ENCODE measurements at regions of chr14 and their contacts with region 1.

Region 1: DNA sequence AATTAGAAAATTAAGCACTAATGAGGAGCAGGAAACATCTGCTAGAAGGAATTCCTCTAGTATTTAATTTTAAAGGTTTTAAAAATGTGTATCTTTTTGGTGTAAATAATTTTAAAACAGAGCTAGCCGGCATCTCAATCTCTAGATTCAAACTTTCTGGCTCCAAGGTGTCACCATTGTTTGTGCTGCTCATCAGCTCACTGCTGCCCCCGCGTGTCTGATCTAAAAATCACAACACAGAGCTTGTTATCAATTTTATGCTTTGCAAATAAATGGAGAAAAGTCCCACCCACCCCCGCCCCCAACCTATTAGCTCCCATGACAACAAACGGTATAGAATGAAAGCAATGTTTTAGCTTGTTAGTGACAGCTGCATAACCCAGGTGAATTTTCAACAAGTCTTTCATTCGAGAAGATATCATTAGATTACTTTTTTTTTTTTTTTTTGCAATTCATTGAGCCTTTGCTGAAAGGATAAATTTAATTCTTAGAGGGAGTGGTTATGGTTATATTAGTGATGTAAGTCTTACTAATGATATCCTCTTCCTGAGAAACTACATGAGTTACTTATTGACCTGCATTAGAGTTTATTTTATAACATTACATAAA is 11.3 kb upstream of the ABHD12B start:
- DNase-seq: peak; percentile 90
- ATAC-seq: peak; percentile 71
- H3K4me3 ChIP-seq: peak overlapping the region; percentile 58 to 92 (median 69)
- H3K4me3 Mint-ChIP-seq: peak overlapping the region; percentile 95
- H3K27ac ChIP-seq: peak overlapping the region; percentile 34 to 44
- H3K27ac Mint-ChIP-seq: peak overlapping the region; percentile 91
- H3K4me1 ChIP-seq: peaks cover 9 to 14% of the 10 kb centered on the region in 2 donors
- H3K4me1 Mint-ChIP-seq: peaks cover 15% of the 10 kb centered on the region
- H3K27me3 ChIP-seq: no peaks in the 10 kb centered on the region
- H3K27me3 Mint-ChIP-seq: peaks cover 2% of the 10 kb centered on the region
- CTCF ChIP-seq: peak; percentile 87

Region 2: GRCh38 chr14:50321009-50321660 is 539.4 kb before region 1 on chr14:
- CTCF ChIA-PET with region 1: interaction called, 11 read pairs
- POLR2A ChIA-PET with region 1: no interaction called
- intact Hi-C with region 1: no loop called
- DNase-seq: peak; percentile 81
- ATAC-seq: peak; percentile 94
- H3K4me3 ChIP-seq: no peak overlapping the region
- H3K4me3 Mint-ChIP-seq: no peak overlapping the region
- H3K27ac ChIP-seq: peak overlapping the region in 1 of 2 donors; percentile 64
- H3K27ac Mint-ChIP-seq: no peak overlapping the region
- H3K4me1 ChIP-seq: peaks cover 10% of the 10 kb centered on the region in 2 donors
- H3K4me1 Mint-ChIP-seq: peaks cover 17% of the 10 kb centered on the region
- H3K27me3 ChIP-seq: no peaks in the 10 kb centered on the region
- H3K27me3 Mint-ChIP-seq: no peaks in the 10 kb centered on the region
- CTCF ChIP-seq: peak; percentile 89

Region 3: DNA sequence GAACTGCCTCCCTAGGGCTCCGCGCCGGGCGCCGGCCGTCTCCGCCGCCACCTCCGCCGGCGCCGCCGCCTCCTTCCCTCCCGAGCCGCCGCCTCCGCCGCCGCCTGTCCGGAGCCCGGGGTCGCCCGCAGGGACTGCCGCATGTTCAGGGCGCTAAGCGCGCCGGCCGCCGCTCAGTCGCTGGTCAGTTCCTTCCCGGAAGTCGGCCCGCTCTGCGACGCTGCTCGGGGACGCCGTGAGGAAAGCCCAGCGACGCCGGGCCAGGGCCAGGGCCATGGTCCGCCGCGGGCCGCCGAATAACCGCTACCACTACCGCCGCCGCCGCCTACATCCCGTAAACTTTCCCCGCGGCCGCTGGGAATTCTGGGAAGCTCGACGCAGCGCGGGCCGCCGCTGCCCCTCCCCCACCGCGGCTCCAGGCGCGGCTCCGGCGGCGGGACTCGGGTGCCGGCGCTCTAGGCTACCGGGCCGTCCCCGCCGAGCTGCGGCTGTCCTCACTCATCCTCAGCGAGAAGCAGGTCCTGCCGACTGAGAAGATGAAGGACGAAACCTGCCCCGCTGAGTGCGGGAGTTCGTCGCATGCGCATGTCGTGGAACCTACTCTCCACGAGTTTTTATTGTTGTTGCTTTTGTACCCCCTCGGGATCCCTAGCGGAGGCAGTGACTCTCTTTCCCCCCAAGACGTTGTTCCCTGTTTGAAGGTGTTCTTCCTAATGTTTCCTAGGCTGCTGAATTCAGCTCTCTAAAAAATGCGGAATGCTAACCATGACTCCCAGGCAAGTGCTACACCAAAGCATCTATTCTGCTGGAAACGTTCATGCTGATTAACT is 192.4 kb before region 1 on chr14 and contains the start of gene SAV1:
- CTCF ChIA-PET with region 1: no interaction called
- POLR2A ChIA-PET with region 1: interaction called, 5 read pairs
- intact Hi-C with region 1: loop called (anchors 2 kb)
- DNase-seq: peak; percentile 80
- ATAC-seq: peak; percentile 63
- H3K4me3 ChIP-seq: peak within 1 kb of the TSS; percentile 47 to 93 (median 70)
- H3K4me3 Mint-ChIP-seq: no peak within 1 kb of the TSS
- H3K27ac ChIP-seq: peak within 1 kb of the TSS; percentile 83 to 91
- H3K27ac Mint-ChIP-seq: no peak within 1 kb of the TSS
- H3K4me1 ChIP-seq: peaks cover 22 to 42% of the 10 kb centered on the region in 2 donors
- H3K4me1 Mint-ChIP-seq: peaks cover 26% of the 10 kb centered on the region
- H3K27me3 ChIP-seq: no peaks in the 10 kb centered on the region
- H3K27me3 Mint-ChIP-seq: no peaks in the 10 kb centered on the region
- CTCF ChIP-seq: no peak
- total RNA-seq, gene SAV1: 36.1 and 39.7 TPM in 2 replicates

Region 4: DNA sequence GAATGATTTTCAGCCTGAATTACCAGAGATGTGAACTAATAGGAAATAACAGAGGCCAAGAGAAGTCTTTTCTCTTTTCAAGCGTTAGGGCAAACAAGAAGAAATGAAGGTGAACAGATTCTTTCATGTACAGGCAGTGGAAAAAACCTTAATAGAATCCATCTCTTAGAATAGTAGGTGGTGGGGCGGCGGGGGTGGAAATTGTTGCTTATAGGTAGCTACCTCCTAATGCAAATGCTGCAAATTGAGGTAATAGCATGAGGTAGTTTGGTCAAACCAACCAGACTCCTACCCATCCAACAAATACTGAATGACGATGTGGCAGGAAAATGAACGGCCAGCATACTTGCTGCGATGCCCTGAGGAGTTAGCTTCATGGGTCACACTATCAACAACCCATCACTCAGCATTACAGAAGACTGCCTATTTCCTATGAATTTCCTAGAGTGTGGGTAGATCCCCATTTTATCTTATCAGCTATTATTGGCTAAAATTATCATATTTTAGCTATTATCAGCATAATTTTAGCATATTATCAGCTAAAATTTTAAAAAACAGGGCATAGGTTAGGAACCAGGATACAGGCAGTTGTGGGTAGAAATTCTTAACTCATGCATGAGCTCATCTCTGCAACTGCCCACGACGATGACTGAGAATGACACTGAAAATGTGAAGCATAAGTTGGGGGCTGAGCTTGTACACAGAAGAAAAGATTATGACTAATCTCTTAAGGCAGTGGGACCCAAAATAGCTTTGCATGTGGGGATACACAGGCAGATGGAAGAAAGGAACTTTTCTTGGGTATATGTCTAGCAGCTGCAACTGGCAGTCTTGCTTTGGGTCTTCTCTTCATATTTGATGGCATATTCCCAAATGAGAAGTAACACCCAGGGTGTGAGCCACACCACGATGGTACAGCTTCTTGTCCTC is 98.3 kb before region 1 on chr14:
- CTCF ChIA-PET with region 1: interaction called, 41 read pairs
- POLR2A ChIA-PET with region 1: no interaction called
- intact Hi-C with region 1: no loop called
- DNase-seq: no peak
- ATAC-seq: no peak
- H3K4me3 ChIP-seq: no peak overlapping the region
- H3K4me3 Mint-ChIP-seq: no peak overlapping the region
- H3K27ac ChIP-seq: peak overlapping the region in 1 of 2 donors; percentile 53
- H3K27ac Mint-ChIP-seq: peak overlapping the region; percentile 41
- H3K4me1 ChIP-seq: peaks cover under 1 to 3% of the 10 kb centered on the region in 2 donors
- H3K4me1 Mint-ChIP-seq: no peaks in the 10 kb centered on the region
- H3K27me3 ChIP-seq: no peaks in the 10 kb centered on the region
- H3K27me3 Mint-ChIP-seq: no peaks in the 10 kb centered on the region
- CTCF ChIP-seq: no peak

Region 5: GRCh38 chr14:50792051-50792477 is 68.5 kb before region 1 on chr14:
- CTCF ChIA-PET with region 1: interaction called, 178 read pairs
- POLR2A ChIA-PET with region 1: interaction called, 10 read pairs
- intact Hi-C with region 1: loop called (anchors 1 kb)
- DNase-seq: peak; percentile 64
- ATAC-seq: peak; percentile 26
- H3K4me3 ChIP-seq: peak overlapping the region in 3 of 5 experiments; percentile 5 to 41 (median 24)
- H3K4me3 Mint-ChIP-seq: peak overlapping the region; percentile 61
- H3K27ac ChIP-seq: peak overlapping the region; percentile 42 to 91
- H3K27ac Mint-ChIP-seq: peak overlapping the region; percentile 73
- H3K4me1 ChIP-seq: peaks cover 99 to 100% of the 10 kb centered on the region in 2 donors
- H3K4me1 Mint-ChIP-seq: peaks cover 96% of the 10 kb centered on the region
- H3K27me3 ChIP-seq: no peaks in the 10 kb centered on the region
- H3K27me3 Mint-ChIP-seq: no peaks in the 10 kb centered on the region
- CTCF ChIP-seq: no peak

Region 6: DNA sequence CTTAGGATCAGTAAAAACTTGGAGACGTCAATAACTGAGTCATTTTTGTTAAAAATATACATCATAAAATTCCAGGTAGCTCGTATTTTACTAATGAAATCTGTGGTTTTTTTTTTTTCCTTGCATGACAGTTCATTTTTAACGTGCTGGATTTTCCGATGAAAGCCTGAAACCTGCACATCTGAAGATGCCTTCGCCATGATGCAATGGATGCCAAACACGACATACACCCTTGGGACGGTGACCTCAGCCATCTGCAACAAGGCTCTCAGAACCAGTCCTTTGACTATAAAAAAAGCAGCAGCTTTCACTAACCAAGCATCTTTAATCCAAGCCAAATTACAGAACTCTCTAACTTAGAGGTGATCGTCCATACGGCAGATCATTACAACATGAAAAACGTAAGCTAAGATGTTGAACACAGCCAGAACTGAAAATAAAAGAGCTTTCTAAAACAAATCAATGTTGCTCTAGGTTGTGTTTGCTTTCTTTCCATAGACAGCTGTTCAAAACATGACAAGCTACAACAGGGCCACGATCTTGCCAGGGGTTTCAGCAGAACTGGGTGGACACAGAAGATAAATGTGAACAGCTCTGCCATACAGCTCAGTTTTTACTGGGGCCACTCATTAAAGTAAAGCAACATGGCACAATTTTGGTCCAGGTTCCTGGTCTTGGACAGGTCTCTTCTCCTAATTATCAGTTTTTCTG is 37.4 kb before region 1 on chr14:
- CTCF ChIA-PET with region 1: interaction called, 54 read pairs
- POLR2A ChIA-PET with region 1: interaction called, 12 read pairs
- intact Hi-C with region 1: no loop called
- DNase-seq: peak; percentile 52
- ATAC-seq: peak; percentile 41
- H3K4me3 ChIP-seq: peak overlapping the region; percentile 23 to 60 (median 42)
- H3K4me3 Mint-ChIP-seq: peak overlapping the region; percentile 85
- H3K27ac ChIP-seq: peak overlapping the region; percentile 71 to 92
- H3K27ac Mint-ChIP-seq: peak overlapping the region; percentile 92
- H3K4me1 ChIP-seq: peaks cover 78 to 86% of the 10 kb centered on the region in 2 donors
- H3K4me1 Mint-ChIP-seq: peaks cover 91% of the 10 kb centered on the region
- H3K27me3 ChIP-seq: no peaks in the 10 kb centered on the region
- H3K27me3 Mint-ChIP-seq: no peaks in the 10 kb centered on the region
- CTCF ChIP-seq: no peak

Region 7: GRCh38 chr14:50875359-50876070 is 14.9 kb after region 1 on chr14:
- CTCF ChIA-PET with region 1: interaction called, 12 read pairs
- POLR2A ChIA-PET with region 1: no interaction called
- intact Hi-C with region 1: no loop called
- DNase-seq: peak; percentile 47
- ATAC-seq: peak; percentile 92
- H3K4me3 ChIP-seq: no peak overlapping the region
- H3K4me3 Mint-ChIP-seq: no peak overlapping the region
- H3K27ac ChIP-seq: no peak overlapping the region
- H3K27ac Mint-ChIP-seq: no peak overlapping the region
- H3K4me1 ChIP-seq: peaks cover 22% of the 10 kb centered on the region in 2 donors
- H3K4me1 Mint-ChIP-seq: peaks cover 28% of the 10 kb centered on the region
- H3K27me3 ChIP-seq: peaks cover 0 to 19% (median 9%) of the 10 kb centered on the region in 4 experiments
- H3K27me3 Mint-ChIP-seq: peaks cover 40% of the 10 kb centered on the region
- CTCF ChIP-seq: no peak

Region 8: GRCh38 chr14:50906326-50907065 is 45.9 kb after region 1 on chr14:
- CTCF ChIA-PET with region 1: no interaction called
- POLR2A ChIA-PET with region 1: no interaction called
- intact Hi-C with region 1: no loop called
- DNase-seq: no peak
- ATAC-seq: no peak
- H3K4me3 ChIP-seq: no peak overlapping the region
- H3K4me3 Mint-ChIP-seq: no peak overlapping the region
- H3K27ac ChIP-seq: no peak overlapping the region
- H3K27ac Mint-ChIP-seq: no peak overlapping the region
- H3K4me1 ChIP-seq: no peaks in the 10 kb centered on the region
- H3K4me1 Mint-ChIP-seq: peaks cover 4% of the 10 kb centered on the region
- H3K27me3 ChIP-seq: no peaks in the 10 kb centered on the region
- H3K27me3 Mint-ChIP-seq: peaks cover 14% of the 10 kb centered on the region
- CTCF ChIP-seq: no peak

Region 9: DNA sequence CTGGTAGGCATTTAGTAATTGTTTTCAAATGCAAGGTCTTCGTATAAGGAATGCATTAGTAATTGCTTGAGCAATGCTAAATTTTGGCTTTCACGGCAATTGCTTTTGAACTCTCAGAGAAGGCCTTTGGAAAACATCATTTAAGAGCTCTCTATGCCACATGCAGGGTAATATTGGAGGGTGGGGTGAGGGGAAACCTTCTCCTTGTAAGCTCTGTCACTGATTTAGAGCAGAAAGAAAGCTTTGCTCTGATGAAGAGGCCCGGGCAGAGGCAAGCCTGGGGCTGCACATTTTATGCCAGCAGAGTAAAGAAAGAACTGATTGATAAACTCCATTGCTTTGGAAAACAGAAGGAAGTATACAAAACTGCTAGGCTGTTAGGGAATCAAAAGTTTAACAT is 163.4 kb after region 1 on chr14:
- CTCF ChIA-PET with region 1: no interaction called
- POLR2A ChIA-PET with region 1: no interaction called
- intact Hi-C with region 1: no loop called
- DNase-seq: no peak
- ATAC-seq: no peak
- H3K4me3 ChIP-seq: no peak overlapping the region
- H3K4me3 Mint-ChIP-seq: no peak overlapping the region
- H3K27ac ChIP-seq: no peak overlapping the region
- H3K27ac Mint-ChIP-seq: no peak overlapping the region
- H3K4me1 ChIP-seq: no peaks in the 10 kb centered on the region
- H3K4me1 Mint-ChIP-seq: no peaks in the 10 kb centered on the region
- H3K27me3 ChIP-seq: peaks cover 0 to 2% (median 0%) of the 10 kb centered on the region in 4 experiments
- H3K27me3 Mint-ChIP-seq: peaks cover 6% of the 10 kb centered on the region
- CTCF ChIP-seq: no peak